ENCODE measurements at regions of chr14 and their contacts with region 1.

Region 1: GRCh38 chr14:90383075-90383730 is 13.6 kb upstream of the CALM1 start:
- DNase-seq: peak; percentile 100
- ATAC-seq: peak; percentile 93

Region 2: GRCh38 chr14:90140298-90140955 is 242.8 kb before region 1 on chr14:
- intact Hi-C with region 1: no loop called
- DNase-seq: no peak
- ATAC-seq: no peak

Region 3: DNA sequence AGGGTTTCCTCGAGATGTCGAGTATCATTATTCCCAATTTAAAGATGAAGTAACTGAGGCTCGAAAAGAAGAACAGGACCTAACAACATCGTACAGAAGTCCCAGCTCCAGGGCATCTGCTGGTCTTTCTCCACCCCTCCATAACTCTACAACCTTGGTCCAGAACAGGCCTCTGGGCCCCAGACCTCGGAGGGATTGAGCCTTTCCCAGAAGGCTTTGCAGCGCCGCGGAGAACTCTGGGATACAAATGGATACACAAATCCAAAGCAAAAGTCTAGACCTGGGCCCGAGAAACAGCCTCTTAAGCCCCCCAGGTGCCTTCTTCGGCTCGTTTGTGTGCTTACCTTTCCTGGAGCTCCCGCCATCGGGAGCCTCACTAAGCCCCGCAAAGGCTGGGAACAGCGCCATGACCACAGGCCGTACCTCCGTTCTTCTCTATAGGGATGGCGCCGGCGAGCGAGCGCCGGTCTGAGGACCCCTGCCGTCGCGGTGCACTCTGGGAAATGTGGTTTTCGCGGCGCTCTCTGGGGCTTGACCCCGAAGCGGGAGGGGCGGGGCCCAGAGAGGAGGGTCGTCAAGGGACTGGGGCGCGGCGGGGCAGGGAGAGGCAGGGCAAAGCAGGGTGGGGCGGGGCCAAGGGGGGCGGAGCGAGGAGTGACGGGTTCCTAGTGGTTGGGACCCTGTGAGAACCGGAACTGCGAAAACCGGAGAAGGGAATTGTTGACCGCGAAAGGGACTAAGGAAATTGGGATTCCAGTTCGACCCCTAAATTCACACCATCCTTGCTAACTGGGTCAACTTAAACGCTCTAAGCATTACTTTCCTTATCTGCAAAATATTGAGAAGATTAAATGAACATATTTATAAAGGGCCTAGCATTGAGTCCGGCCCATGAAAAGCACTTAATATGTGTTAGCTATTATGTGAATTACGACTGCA is 51.4 kb before region 1 on chr14 and contains the start of gene NRDE2:
- intact Hi-C with region 1: loop called (anchors 5 kb)
- DNase-seq: peak; percentile 100
- ATAC-seq: peak; percentile 99
- total RNA-seq, gene NRDE2: 9.5 TPM